GM12878 (cell line): ENCODE measurements at regions of chr1 and their contacts with region 1.

Region 1: GRCh38 chr1:51512606-51513005 is 6.5 kb downstream of the EPS15 start:
- DNase-seq: no peak
- ATAC-seq: peak; percentile 19
- H3K4me3 ChIP-seq: peak overlapping the region; percentile 37; the same call in 1 of the 2 replicates
- H3K27ac ChIP-seq: peak overlapping the region; percentile 83
- H3K4me1 ChIP-seq: peaks cover 24% of the 10 kb centered on the region
- H3K27me3 ChIP-seq: no peaks in the 10 kb centered on the region
- CTCF ChIP-seq: no peak
- EP300 ChIP-seq: no peak
- POLR2A ChIP-seq: no peak
- RAD21 ChIP-seq: no peak

Region 2: DNA sequence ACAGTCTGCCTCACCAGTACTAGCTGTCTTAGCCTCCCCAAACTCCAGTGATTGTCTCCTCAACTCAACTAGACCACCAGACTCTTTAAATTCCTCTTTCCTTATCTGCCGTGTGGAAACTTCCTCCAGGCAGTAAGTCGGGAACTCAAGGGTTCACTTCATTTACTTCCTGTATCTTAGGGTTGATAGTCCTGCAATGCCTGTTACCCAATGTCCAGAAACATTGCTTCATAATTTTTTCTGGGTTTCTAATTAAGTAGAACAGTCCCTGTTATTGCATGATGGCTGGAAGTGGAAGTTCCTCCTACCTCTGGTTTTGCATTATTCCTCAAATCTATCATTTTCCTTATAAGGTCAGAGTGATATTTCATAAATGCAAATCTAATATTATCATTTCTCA is 337.3 kb before region 1 on chr1:
- CTCF ChIA-PET with region 1: no interaction called
- POLR2A ChIA-PET with region 1: no interaction called
- RAD21 ChIA-PET with region 1: no interaction called
- SMC1A ChIA-PET with region 1: no interaction called
- in situ Hi-C with region 1: no loop called
- intact Hi-C with region 1: no loop called
- DNase-seq: no peak
- ATAC-seq: no peak
- H3K4me3 ChIP-seq: no peak overlapping the region
- H3K27ac ChIP-seq: no peak overlapping the region
- H3K4me1 ChIP-seq: peaks cover 3% of the 10 kb centered on the region; the same call in 1 of the 2 replicates
- H3K27me3 ChIP-seq: no peaks in the 10 kb centered on the region; a peak in 1 of 4 replicates
- CTCF ChIP-seq: no peak
- EP300 ChIP-seq: no peak
- POLR2A ChIP-seq: no peak
- RAD21 ChIP-seq: no peak

Region 3: GRCh38 chr1:51392241-51392640 is 120.4 kb before region 1 on chr1:
- CTCF ChIA-PET with region 1: no interaction called
- POLR2A ChIA-PET with region 1: no interaction called
- RAD21 ChIA-PET with region 1: no interaction called
- SMC1A ChIA-PET with region 1: no interaction called
- in situ Hi-C with region 1: no loop called
- intact Hi-C with region 1: no loop called
- DNase-seq: no peak
- ATAC-seq: no peak
- H3K4me3 ChIP-seq: no peak overlapping the region
- H3K27ac ChIP-seq: no peak overlapping the region
- H3K4me1 ChIP-seq: no peaks in the 10 kb centered on the region
- H3K27me3 ChIP-seq: no peaks in the 10 kb centered on the region
- CTCF ChIP-seq: no peak
- EP300 ChIP-seq: no peak
- POLR2A ChIP-seq: no peak
- RAD21 ChIP-seq: no peak

Region 4: DNA sequence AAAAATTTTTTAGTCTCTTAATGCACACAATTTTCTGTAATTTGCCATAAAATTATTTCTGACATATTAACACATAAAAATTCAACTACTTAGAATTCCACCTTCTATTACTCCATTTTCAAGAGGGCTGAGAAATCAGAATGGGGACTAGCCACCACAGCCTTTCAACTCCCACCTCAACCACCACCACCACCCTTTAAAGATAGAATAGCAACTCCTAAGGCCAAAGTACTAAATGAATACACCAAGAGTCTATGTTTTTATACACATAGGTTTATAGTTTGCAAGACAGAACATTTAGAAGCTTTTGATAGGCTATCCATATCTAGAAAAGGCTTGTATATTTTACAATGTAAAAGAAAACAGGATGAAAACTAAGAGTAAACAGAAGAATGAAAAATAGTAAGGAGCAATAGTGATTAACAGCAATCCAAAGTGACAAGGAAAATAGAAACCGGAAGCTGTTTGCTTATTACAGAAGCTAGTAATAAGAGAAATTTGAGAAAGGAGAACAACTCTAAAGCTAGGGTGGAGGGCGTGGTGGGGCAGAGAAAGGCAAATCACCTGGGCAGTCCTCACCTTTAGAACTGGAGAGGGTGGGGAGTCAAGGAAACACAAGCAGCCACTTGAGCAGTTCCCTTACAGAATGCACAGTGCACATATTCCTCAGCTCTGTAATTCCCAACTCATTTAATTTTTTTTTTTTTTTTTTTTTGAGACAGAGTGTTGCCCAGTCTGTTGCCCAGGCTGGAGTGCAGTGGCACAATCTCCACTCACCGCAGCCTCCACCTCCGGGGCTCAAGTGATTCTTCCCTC is 21.2 kb before region 1 on chr1:
- CTCF ChIA-PET with region 1: interaction called, 6 read pairs
- POLR2A ChIA-PET with region 1: interaction called, 5 read pairs
- RAD21 ChIA-PET with region 1: interaction called, 15 read pairs
- SMC1A ChIA-PET with region 1: interaction called, 41 read pairs
- in situ Hi-C with region 1: no loop called
- intact Hi-C with region 1: no loop called
- DNase-seq: no peak
- ATAC-seq: peak; percentile 75
- H3K4me3 ChIP-seq: peak overlapping the region; percentile 69; the same call in 1 of the 2 replicates
- H3K27ac ChIP-seq: peak overlapping the region; percentile 72
- H3K4me1 ChIP-seq: peaks cover 45% of the 10 kb centered on the region
- H3K27me3 ChIP-seq: no peaks in the 10 kb centered on the region
- CTCF ChIP-seq: no peak
- EP300 ChIP-seq: 0 out of 4 replicates have a peak, but pooled peaks of 1 of the 2 experiments have one; percentile 3
- POLR2A ChIP-seq: no peak
- RAD21 ChIP-seq: no peak

Region 5: GRCh38 chr1:51497340-51497739 is 15.3 kb before region 1 on chr1:
- CTCF ChIA-PET with region 1: interaction called, 6 read pairs
- POLR2A ChIA-PET with region 1: interaction called, 83 read pairs
- RAD21 ChIA-PET with region 1: interaction called, 111 read pairs
- SMC1A ChIA-PET with region 1: interaction called, 147 read pairs
- in situ Hi-C with region 1: no loop called
- intact Hi-C with region 1: loop called (anchors 2 kb)
- DNase-seq: no peak
- ATAC-seq: no peak
- H3K4me3 ChIP-seq: no peak overlapping the region
- H3K27ac ChIP-seq: no peak overlapping the region
- H3K4me1 ChIP-seq: peaks cover 60% of the 10 kb centered on the region
- H3K27me3 ChIP-seq: no peaks in the 10 kb centered on the region
- CTCF ChIP-seq: no peak
- EP300 ChIP-seq: no peak
- POLR2A ChIP-seq: no peak
- RAD21 ChIP-seq: no peak

Region 6: DNA sequence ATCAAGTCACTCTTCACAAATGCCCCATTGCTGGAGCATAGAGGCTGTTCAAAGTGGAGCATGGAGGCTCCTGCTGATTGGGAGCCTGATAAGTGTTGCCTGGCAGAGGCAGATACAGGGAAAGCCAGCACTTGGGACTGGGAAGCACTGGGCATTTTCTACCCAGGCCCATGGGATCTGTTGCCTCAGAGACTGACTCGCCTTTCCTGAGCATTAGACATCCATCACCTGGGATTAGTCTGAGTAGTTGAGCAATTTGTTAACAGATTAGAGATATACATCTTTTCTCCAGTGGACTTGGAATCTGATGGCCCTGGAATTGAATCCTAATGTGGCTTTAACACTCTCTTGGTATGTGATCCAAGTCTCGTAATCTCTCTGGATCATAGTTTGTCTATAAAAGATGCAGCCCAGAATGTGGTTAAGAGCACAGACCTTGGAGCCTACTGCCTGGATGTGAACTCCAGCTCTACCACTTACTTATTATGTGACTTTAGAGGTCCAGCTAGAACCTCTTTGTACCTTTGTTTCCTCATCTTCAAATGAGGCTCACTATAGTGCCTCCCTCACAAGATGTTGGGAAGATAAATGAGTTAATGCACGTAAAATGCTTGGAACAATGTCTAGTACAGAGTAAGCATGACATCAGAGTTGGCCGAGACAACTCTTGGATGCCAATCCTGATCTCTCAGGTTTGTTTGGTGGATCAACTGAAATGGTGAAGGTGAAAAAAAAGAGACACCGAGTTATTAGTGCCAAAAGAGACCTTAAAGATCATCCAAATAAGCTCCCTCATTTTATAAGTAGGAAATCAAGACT is 404.2 kb after region 1 on chr1:
- CTCF ChIA-PET with region 1: no interaction called
- POLR2A ChIA-PET with region 1: no interaction called
- RAD21 ChIA-PET with region 1: no interaction called
- SMC1A ChIA-PET with region 1: no interaction called
- in situ Hi-C with region 1: no loop called
- intact Hi-C with region 1: no loop called
- DNase-seq: no peak
- ATAC-seq: no peak
- H3K4me3 ChIP-seq: no peak overlapping the region
- H3K27ac ChIP-seq: no peak overlapping the region
- H3K4me1 ChIP-seq: no peaks in the 10 kb centered on the region
- H3K27me3 ChIP-seq: no peaks in the 10 kb centered on the region
- CTCF ChIP-seq: no peak
- EP300 ChIP-seq: no peak
- POLR2A ChIP-seq: no peak
- RAD21 ChIP-seq: no peak